PC-9 (cell line): ENCODE measurements at regions of chr12 and their contacts with region 1.

Region 1: GRCh38 chr12:52213512-52214420 is 19.3 kb upstream of the KRT7 start:
- DNase-seq: peak; percentile 79 to 93
- H3K4me3 ChIP-seq: no peak overlapping the region
- H3K27ac ChIP-seq: peak overlapping the region; percentile 85
- H3K4me1 ChIP-seq: peaks cover 56% of the 10 kb centered on the region
- H3K27me3 ChIP-seq: no peaks in the 10 kb centered on the region
- CTCF ChIP-seq: peak; percentile 98

Region 2: DNA sequence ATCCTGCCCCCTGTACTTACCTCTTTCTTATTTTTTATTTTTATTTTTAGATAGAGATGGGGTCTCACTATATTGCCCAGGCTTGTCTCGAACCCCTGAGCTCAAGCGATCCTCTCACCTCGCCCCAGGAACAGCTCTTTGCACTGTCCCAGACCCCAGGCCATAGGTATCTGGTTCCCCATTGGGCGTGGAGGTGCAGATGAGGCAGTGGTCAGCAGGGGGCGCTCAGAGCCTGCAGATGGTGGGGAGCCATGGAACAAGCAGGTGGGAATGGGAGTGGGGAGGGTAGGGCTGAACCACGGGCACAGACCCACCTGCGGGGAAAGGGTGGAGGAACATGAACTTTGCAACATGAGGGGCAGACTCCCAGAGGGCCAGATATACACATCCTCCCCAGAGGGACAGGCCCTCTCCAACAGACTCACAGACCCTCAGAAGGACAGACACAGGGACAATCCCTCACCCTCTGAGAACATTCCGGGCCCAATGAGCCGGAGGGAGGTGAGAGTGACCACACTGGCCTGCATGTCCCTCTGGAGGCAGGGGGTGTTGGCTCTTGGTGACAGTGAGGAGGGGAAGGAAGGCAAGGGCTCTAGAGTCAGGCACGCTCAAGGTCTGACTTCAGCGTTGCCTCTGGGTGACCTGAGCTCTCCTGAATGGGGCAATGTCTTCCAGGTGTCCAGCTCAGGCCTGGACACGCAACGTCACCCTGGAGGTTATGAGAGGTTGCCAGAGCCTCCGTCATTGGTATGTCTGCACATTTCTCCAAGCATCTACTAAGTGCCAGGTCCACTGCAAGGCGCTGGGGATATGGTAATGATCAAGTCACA is 56.8 kb before region 1 on chr12:
- CTCF ChIA-PET with region 1: no interaction called
- POLR2A ChIA-PET with region 1: interaction called, 8 read pairs
- intact Hi-C with region 1: loop called (anchors 2 kb)
- DNase-seq: peak; percentile 54 to 82
- H3K4me3 ChIP-seq: no peak overlapping the region
- H3K27ac ChIP-seq: no peak overlapping the region
- H3K4me1 ChIP-seq: peaks cover 58% of the 10 kb centered on the region
- H3K27me3 ChIP-seq: no peaks in the 10 kb centered on the region
- CTCF ChIP-seq: peak; percentile 99

Region 3: GRCh38 chr12:52192173-52192791 is 21.5 kb before region 1 on chr12:
- CTCF ChIA-PET with region 1: interaction called, 4 read pairs
- POLR2A ChIA-PET with region 1: interaction called, 26 read pairs
- intact Hi-C with region 1: loop called (anchors 1 kb)
- DNase-seq: peak; percentile 90 to 98
- H3K4me3 ChIP-seq: peak overlapping the region; percentile 92
- H3K27ac ChIP-seq: peak overlapping the region; percentile 77
- H3K4me1 ChIP-seq: peaks cover 75% of the 10 kb centered on the region
- H3K27me3 ChIP-seq: no peaks in the 10 kb centered on the region
- CTCF ChIP-seq: no peak

Region 4: DNA sequence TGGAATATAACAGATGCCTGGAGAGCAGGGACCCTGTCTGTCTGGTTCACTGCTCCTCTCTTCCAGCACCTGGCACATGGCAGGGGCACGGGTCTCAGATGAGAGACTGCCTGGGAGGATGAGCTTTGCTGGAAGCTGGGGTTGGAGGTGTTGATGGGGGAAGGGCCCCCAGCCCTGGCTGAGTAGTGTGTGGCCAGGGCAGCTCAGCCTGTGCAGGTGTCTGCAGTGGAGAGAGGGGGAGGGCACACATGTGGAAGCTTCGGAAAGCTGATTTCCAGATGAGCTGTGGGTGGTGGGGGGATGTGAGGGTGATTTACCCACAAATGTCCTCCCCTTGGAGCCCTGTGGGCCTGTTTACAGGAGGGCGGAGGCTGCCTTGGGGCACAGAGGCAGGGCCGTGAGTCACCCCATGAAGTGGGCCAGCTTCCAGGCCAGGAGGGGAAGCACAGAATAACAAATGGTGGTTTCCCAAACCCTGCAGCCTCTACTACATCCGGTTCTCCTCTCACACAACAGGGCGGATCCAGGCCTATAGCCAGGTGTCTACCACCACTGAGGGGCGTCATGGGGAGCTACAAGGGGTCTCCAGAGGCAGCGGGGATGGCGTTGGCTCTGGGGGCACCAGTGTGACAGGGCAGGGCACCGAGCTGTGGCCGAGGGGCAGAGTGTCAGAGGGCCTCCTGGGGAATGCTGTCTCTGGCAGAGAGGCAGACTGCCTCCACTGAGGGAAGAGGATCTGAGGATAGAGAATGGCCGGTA is 30.3 kb after region 1 on chr12:
- CTCF ChIA-PET with region 1: no interaction called
- POLR2A ChIA-PET with region 1: interaction called, 5 read pairs
- intact Hi-C with region 1: loop called (anchors 1 kb)
- DNase-seq: peak; percentile 89 to 95
- H3K4me3 ChIP-seq: 0 out of 2 replicates have a peak overlapping the region, but pooled peaks have one; percentile 7
- H3K27ac ChIP-seq: peak overlapping the region; percentile 90
- H3K4me1 ChIP-seq: peaks cover 99% of the 10 kb centered on the region
- H3K27me3 ChIP-seq: no peaks in the 10 kb centered on the region
- CTCF ChIP-seq: no peak; the same call in 1 of the 2 replicates

Region 5: DNA sequence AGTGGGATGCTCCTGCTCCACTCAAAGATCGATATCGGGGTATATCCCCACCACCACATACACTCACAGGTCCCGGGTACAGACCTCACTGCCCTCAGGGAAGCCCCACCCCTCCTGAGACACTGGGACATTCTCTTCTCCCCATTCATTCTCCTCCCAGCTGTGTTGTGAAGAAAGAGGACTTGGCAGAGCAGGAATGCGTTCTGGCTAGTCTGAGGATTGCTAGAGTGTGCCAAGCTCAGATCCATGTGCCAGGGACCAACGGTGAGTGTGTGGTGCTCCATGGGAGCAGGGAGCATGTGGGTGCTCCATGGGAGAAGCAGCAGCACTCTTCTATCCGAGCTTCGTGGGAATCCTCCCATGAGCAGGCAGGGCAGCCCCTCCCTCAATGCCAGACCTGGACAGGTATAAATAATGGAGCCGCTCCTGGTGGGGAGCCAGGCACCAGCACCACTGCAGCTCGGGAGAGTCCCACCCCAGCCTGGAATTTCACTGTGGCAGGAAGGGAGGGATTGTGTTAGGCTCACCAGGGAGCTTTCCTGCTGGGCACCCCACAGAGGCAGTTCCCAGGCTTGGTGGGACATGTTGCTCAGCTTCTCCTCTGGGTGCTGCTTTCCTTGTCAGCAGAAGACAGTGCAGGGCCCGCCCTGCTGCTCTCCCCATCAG is 308.7 kb after region 1 on chr12:
- CTCF ChIA-PET with region 1: no interaction called
- POLR2A ChIA-PET with region 1: interaction called, 3 read pairs
- intact Hi-C with region 1: loop called (anchors 2 kb)
- DNase-seq: peak; percentile 78 to 87
- H3K4me3 ChIP-seq: peak overlapping the region; percentile 31; the same call in 1 of the 2 replicates
- H3K27ac ChIP-seq: peak overlapping the region; percentile 96
- H3K4me1 ChIP-seq: peaks cover 66% of the 10 kb centered on the region
- H3K27me3 ChIP-seq: no peaks in the 10 kb centered on the region
- CTCF ChIP-seq: no peak